ENCODE measurements at regions of chr12 and their contacts with region 1.

Region 1: DNA sequence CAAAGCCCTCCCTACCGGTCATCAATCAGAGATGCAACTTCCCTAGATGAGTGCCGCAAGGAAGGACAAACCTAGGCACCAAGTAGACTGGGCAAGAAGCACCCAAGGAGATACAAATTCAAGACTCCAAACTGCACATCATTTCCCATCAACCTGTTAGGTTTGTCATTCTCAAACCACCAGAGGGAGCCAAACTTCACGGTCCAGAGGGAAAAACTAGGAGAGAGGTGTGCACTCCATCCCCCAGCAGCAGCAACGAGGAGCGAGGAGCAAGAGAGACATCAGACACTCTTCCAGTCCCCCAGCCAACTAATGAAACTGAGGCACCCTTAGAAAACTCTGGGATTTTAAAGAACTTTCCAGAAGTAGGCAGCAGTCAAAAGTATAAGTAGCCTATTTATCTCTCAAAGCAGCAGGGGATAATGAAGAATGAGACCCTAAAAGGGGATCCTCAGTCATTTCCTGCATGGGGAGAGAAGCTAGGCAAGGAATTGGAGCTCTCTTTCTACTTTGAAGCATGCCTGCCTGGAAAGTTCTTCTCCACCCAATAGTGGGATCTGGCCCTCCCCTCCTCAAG is 37.0 kb upstream of the NT5DC3 start:
- DNase-seq: peak; percentile 78
- H3K4me3 ChIP-seq: no peak overlapping the region
- H3K27ac ChIP-seq: no peak overlapping the region
- H3K4me1 ChIP-seq: peaks cover 0 to 5% (median 0%) of the 10 kb centered on the region in 4 donors
- H3K27me3 ChIP-seq: no peaks in the 10 kb centered on the region
- CTCF ChIP-seq: peak; percentile 51 to 64 (median 60)
- EP300 ChIP-seq: no peak
- POLR2A ChIP-seq: no peak

Region 2: GRCh38 chr12:103771466-103771865 is 106.6 kb before region 1 on chr12:
- intact Hi-C with region 1: loop called (anchors 5 kb)
- DNase-seq: peak; percentile 68
- H3K4me3 ChIP-seq: no peak overlapping the region
- H3K27ac ChIP-seq: peak overlapping the region in 3 of 4 donors; percentile 20 to 56 (median 52)
- H3K4me1 ChIP-seq: peaks cover 0 to 49% (median 37%) of the 10 kb centered on the region in 4 donors
- H3K27me3 ChIP-seq: no peaks in the 10 kb centered on the region
- CTCF ChIP-seq: peak in 1 of 4 experiments; percentile 30
- EP300 ChIP-seq: no peak
- POLR2A ChIP-seq: no peak

Region 3: GRCh38 chr12:103901518-103902173 is 23.6 kb after region 1 on chr12:
- intact Hi-C with region 1: no loop called
- DNase-seq: no peak
- H3K4me3 ChIP-seq: no peak overlapping the region
- H3K27ac ChIP-seq: no peak overlapping the region
- H3K4me1 ChIP-seq: no peaks in the 10 kb centered on the region
- H3K27me3 ChIP-seq: no peaks in the 10 kb centered on the region
- CTCF ChIP-seq: no peak
- EP300 ChIP-seq: no peak
- POLR2A ChIP-seq: no peak